Cardiac septum (tissue), 1 donor: ENCODE measurements at regions of chr9 and their contacts with region 1.

Region 1: DNA sequence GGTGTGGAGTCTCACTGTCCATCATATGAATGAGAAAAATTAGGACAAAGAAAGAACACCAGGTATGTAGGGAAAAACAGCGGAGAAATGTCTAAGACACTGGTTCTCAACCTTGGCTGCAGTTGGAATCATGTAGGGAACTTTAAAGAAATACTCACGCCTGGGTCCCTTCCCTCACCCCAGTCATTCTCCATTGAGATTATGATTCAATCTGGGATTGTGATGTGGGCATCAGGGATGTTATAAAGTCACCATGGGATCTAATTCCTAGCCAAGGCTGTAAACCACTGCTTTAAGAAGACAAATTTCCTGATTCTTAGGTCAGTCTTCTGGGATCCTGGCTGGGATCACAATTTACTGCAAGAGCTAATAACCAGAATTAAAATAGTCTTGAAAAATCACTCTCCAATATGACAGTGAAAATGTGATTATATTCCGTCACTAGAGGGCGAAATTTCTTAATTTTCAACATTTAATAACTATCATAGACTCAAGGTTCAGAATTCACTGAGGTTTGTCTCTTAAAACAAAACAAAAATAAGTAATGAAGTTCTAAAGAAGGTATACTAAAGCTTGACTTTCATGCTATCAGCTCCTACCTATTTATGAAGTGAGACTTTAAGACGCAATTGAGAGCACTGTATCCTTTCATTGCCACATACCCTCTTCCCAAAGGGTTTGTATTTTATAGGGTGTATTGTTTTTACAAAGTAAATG is 60.5 kb downstream of the GLDC start:
- DNase-seq: no peak

Region 2: GRCh38 chr9:6433405-6433804 is 151.6 kb before region 1 on chr9:
- intact Hi-C with region 1: no loop called
- DNase-seq: no peak

Region 3: DNA sequence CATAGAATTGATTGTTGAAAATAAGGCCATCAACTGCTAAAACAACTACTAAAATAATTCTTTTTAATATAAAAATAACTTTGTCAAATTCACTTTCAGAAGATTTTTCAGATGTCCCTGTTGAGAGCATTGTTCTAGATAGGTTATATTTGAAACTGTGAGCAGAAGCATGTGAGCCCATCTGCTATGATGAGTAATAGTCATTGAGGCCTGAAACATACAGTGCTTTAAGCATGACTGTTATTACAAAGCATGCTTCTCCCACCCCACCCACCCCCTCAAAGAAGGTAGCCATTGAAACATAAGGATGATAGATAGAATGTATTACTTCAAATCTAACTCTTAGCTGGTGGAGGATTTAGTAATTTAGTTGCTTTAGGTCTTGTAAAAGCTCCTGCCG is 86.1 kb before region 1 on chr9:
- intact Hi-C with region 1: no loop called
- DNase-seq: no peak

Region 4: DNA sequence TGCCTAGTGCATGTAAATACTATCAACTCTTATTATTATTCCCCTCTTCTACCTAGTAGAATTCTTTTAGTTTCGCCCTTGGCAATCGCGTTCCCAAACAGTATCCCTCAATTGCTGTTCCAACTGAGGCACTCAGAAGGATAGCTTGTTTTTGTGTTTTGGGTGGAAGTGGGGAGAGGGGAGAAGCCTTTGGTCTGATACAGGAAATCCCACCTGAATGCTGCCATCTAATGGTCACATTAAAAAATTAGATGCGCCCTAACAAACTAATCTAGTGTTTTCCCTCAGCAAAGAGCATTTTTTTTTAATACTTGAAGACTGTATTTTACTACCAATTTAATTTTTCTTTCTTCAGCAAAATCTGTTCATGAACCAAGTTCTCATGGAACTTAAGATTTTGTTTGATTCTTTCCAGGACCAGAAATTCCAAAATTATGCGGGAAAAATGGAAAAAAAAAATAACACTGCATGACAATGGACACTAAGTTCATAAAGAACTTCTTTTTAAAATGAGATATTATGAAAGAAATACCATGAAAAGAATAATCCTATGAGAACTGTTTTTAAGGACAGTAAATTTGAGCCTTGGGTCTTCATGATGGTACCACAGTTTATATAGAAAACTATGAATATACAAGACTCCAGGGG is 82.7 kb after region 1 on chr9:
- intact Hi-C with region 1: loop called (anchors 5 kb)
- DNase-seq: no peak

Region 5: DNA sequence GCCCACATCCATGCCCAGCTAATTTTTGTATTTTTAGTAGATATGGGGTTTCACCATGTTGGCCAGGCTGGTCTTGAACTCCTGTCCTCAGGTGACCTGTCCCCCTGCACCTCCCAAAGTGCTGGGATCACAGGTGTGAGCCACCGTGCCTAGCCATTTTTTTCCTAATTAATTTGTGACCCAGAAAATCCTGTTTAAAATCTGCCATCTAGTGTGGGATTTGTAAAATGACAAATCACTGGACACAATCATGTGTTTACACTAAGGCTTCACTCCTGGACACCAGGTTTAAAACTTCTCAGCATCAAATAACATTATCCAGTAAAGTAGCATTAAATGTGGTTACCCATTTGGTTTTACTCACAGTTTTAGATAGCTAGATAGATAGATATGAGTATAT is 154.2 kb after region 1 on chr9:
- intact Hi-C with region 1: loop called (anchors 5 kb)
- DNase-seq: no peak